Gastrocnemius medialis (tissue), 4 donors: ENCODE measurements at regions of chr2 and their contacts with region 1.

Region 1: DNA sequence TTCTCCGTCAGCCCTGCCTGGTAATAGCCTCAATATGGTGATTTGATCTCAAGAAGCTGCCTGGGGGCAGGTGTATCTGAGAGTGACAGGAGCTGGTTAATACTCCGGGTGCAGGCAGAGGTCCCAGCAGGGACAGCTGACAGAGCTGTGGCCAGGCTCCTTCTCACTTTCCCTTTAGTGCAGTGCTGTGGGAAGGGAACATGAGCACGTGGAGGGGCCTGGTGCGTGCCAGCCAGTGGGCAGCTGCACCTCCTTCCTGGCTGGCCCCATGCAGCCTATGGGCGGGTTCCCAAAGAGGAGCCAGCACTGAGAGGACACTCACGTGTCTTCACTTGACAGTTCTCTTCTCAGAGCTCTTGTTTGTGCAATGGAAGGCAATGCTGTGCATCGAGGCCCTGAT is 9.1 kb downstream of the CNNM4 start:
- DNase-seq: peak; percentile 95 to 98
- ATAC-seq: peak; percentile 96 to 97
- H3K4me3 ChIP-seq: peak overlapping the region in 2 of 4 donors; percentile 17 to 18
- H3K27ac ChIP-seq: peak overlapping the region; percentile 89 to 95 (median 92)
- H3K4me1 ChIP-seq: peaks cover 27 to 29% of the 10 kb centered on the region in 2 donors
- H3K27me3 ChIP-seq: no peaks in the 10 kb centered on the region
- CTCF ChIP-seq: peak in 1 of 5 experiments; percentile 17
- POLR2A ChIP-seq: peak in 1 of 2 donors; percentile 51

Region 2: GRCh38 chr2:96565111-96565510 is 204.7 kb before region 1 on chr2:
- in situ Hi-C with region 1: no loop called
- intact Hi-C with region 1: no loop called
- DNase-seq: no peak
- ATAC-seq: no peak
- H3K4me3 ChIP-seq: no peak overlapping the region
- H3K27ac ChIP-seq: no peak overlapping the region
- H3K4me1 ChIP-seq: no peaks in the 10 kb centered on the region
- H3K27me3 ChIP-seq: no peaks in the 10 kb centered on the region
- CTCF ChIP-seq: no peak
- POLR2A ChIP-seq: no peak

Region 3: GRCh38 chr2:96788442-96789244 is 18.8 kb after region 1 on chr2:
- in situ Hi-C with region 1: no loop called
- intact Hi-C with region 1: loop called (anchors 1 kb)
- DNase-seq: peak; percentile 67 to 91
- ATAC-seq: peak; percentile 90 to 93
- H3K4me3 ChIP-seq: peak overlapping the region; percentile 30 to 33 (median 31)
- H3K27ac ChIP-seq: peak overlapping the region; percentile 88 to 96 (median 92)
- H3K4me1 ChIP-seq: peaks cover 29 to 31% of the 10 kb centered on the region in 2 donors
- H3K27me3 ChIP-seq: no peaks in the 10 kb centered on the region
- CTCF ChIP-seq: no peak
- POLR2A ChIP-seq: peak; percentile 33 to 51

Region 4: DNA sequence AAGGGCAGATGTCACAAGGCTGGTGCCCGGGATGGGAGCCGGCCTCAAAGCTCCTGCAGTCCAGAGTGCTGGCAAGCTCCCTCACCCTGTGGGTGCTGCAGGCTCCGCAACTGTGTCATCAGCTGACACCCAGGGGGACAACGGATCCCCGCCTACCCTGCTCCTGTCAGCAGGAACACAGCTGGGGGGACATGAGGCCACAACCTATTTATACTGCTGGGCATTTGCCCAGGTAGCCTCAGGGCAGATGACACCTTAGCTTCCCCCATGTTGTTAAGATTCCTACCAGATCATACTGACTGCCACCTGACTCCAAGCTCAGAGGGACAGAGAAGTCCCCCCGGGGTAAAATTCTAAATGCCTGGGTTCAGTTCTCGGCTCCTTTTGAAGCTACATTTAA is 72.8 kb after region 1 on chr2:
- in situ Hi-C with region 1: no loop called
- intact Hi-C with region 1: loop called (anchors 2 kb)
- DNase-seq: peak; percentile 96 to 99
- ATAC-seq: peak; percentile 71 to 82
- H3K4me3 ChIP-seq: peak overlapping the region; percentile 52 to 65 (median 64)
- H3K27ac ChIP-seq: peak overlapping the region; percentile 94 to 99 (median 96)
- H3K4me1 ChIP-seq: peaks cover 21 to 44% of the 10 kb centered on the region in 2 donors
- H3K27me3 ChIP-seq: no peaks in the 10 kb centered on the region
- CTCF ChIP-seq: no peak
- POLR2A ChIP-seq: peak; percentile 83 to 94

Region 5: DNA sequence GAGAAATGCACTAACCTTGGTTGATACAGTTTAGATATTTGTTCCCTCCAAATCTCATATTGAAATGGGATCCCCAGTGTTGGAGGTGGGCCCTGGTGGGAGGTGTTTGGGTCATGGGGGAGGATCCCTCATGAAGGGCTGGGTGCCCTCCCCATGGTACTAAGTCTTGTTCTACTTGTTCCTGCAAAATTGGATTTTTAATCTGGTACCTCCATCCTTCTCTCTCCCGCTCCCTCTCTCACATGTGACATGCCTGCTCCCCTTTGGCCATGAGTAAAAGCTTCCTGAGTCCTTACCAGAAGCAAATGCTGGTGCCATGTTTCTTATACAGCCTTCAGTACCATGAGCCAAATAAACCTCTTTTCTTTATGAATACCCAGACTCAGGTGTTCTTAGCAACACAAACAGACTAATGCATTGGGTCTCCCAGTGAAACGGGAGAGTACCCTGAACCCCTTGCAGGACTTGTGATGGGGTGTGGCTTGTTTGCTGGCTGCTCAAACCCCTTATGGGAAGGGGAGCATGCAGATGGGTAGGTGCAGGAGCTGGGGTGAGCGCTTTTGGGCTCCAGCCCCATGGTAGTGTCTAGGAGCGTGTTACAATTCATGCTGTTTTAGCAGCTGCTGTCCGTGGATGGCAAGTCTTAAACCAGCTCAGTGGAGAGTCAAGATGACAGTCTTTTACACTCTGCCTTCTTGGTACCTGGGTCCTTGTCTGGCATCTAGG is 297.6 kb after region 1 on chr2:
- in situ Hi-C with region 1: no loop called
- intact Hi-C with region 1: no loop called
- DNase-seq: no peak
- ATAC-seq: no peak
- H3K4me3 ChIP-seq: no peak overlapping the region
- H3K27ac ChIP-seq: no peak overlapping the region
- H3K4me1 ChIP-seq: no peaks in the 10 kb centered on the region
- H3K27me3 ChIP-seq: no peaks in the 10 kb centered on the region
- CTCF ChIP-seq: no peak
- POLR2A ChIP-seq: no peak